ENCODE measurements at regions of chr2 and their contacts with region 1.

Region 1: DNA sequence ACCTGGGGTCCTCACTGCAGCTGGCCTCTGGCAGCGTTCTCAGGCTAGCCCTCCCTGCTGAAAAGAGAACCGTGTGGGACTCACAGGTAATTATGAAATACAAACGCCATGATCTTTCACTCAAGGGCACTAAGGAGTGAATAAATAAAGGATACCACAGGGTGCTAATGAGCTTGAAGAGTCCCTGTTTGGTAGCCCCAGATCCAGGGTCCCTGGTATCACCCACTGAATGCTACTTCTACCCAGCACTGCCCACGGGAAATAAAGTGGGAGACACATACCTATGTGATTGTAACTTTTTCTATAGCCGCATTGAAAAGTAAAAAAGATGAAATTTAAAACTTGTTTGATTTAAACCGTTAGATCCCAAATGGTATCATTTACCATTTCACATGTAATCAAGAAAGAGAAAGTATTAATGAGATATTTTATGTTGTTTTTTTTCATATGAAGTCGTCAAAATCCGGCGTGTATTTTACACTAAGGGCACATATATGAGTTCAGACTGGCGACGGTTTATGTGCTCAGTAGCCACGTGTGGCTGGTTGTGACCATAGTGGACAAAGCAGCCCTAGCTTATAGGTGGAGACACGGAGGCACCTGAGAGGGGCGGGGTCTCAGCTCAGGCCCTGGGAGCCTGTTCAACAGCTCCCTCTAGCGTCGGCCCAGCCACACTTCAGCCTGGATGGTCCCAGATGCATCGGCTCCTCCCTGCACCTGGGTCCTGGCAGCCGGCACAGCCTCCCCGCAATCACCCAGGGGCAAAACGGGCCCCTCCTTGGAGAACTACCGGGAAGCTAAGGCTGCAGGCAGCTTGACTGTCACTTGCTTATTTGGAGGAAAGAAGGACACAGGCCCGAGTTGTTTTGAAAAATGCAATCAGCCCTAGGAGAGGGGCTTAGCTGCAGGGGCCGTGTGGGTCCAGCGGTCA is 39.2 kb downstream of the ODC1 start:
- DNase-seq: peak; percentile 87
- ATAC-seq: peak; percentile 85
- H3K4me3 Mint-ChIP-seq: peak overlapping the region; percentile 74
- H3K27ac Mint-ChIP-seq: peak overlapping the region; percentile 91
- H3K4me1 Mint-ChIP-seq: peaks cover 39% of the 10 kb centered on the region
- H3K27me3 Mint-ChIP-seq: no peaks in the 10 kb centered on the region

Region 2: GRCh38 chr2:10072656-10073480 is 336.0 kb before region 1 on chr2:
- CTCF ChIA-PET with region 1: interaction called, 38 read pairs
- POLR2A ChIA-PET with region 1: no interaction called
- DNase-seq: peak; percentile 89
- ATAC-seq: peak; percentile 97
- H3K4me3 Mint-ChIP-seq: no peak overlapping the region
- H3K27ac Mint-ChIP-seq: no peak overlapping the region
- H3K4me1 Mint-ChIP-seq: peaks cover 13% of the 10 kb centered on the region
- H3K27me3 Mint-ChIP-seq: peaks cover 51% of the 10 kb centered on the region

Region 3: DNA sequence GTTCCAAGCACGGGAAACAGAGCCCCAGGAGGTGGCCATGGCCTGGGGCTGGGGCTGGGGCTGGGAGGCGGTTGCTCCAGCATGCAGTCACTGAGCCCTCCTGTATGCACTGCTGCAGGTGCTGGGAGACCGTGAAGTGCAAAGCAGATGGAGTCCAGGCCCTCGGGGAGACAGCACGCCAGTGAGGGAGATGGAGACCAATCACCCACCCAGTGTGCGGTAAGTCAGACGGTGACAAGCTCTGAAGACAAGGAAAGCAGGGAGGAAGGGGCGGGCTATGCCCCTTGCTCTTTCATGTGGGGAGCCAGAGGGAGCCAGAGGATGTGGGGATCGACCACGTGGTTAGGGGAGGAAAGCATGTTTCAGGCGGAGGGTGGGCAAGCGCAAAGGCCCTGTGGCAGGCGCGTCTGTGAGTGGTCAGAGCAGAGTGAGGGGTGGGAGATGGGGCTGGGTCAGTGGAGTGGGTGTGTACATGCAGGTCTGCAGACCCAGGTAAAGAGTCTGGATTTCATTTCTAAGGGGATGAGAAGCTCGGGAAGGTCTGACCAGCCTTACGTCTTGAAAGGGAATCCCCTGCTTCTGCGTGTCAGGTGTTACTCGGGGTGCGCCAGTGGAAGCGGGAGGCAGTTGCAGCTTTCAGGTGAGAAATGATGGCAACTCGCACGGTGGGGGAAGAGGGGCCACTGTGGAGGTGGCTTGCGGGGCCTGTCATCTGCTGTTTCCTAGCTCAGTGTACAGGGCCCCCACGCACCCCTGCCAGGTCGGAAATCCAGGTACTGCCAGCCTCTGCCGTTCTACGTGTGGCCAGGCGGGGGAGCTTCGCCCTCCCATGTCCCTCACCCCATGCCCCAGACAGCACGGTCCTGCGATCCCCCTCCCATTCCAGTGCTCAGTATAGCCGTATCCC is 266.9 kb before region 1 on chr2:
- CTCF ChIA-PET with region 1: interaction called, 55 read pairs
- POLR2A ChIA-PET with region 1: no interaction called
- DNase-seq: peak; percentile 75
- ATAC-seq: peak; percentile 59
- H3K4me3 Mint-ChIP-seq: peak overlapping the region; percentile 39
- H3K27ac Mint-ChIP-seq: peak overlapping the region; percentile 89
- H3K4me1 Mint-ChIP-seq: peaks cover 40% of the 10 kb centered on the region
- H3K27me3 Mint-ChIP-seq: no peaks in the 10 kb centered on the region

Region 4: GRCh38 chr2:10269711-10270610 is 139.0 kb before region 1 on chr2:
- CTCF ChIA-PET with region 1: interaction called, 41 read pairs
- POLR2A ChIA-PET with region 1: no interaction called
- DNase-seq: no peak
- ATAC-seq: no peak
- H3K4me3 Mint-ChIP-seq: no peak overlapping the region
- H3K27ac Mint-ChIP-seq: no peak overlapping the region
- H3K4me1 Mint-ChIP-seq: peaks cover 6% of the 10 kb centered on the region
- H3K27me3 Mint-ChIP-seq: peaks cover 3% of the 10 kb centered on the region

Region 5: GRCh38 chr2:10302479-10303180 is 106.3 kb before region 1 on chr2 and contains the start of gene HPCAL1:
- CTCF ChIA-PET with region 1: interaction called, 105 read pairs
- POLR2A ChIA-PET with region 1: interaction called, 6 read pairs
- DNase-seq: peak; percentile 87
- ATAC-seq: peak; percentile 72
- H3K4me3 Mint-ChIP-seq: peak within 1 kb of the TSS; percentile 99
- H3K27ac Mint-ChIP-seq: peak within 1 kb of the TSS; percentile 77
- H3K4me1 Mint-ChIP-seq: peaks cover 75% of the 10 kb centered on the region
- H3K27me3 Mint-ChIP-seq: no peaks in the 10 kb centered on the region
- total RNA-seq, gene HPCAL1: 55.8 to 56.6 TPM

Region 6: DNA sequence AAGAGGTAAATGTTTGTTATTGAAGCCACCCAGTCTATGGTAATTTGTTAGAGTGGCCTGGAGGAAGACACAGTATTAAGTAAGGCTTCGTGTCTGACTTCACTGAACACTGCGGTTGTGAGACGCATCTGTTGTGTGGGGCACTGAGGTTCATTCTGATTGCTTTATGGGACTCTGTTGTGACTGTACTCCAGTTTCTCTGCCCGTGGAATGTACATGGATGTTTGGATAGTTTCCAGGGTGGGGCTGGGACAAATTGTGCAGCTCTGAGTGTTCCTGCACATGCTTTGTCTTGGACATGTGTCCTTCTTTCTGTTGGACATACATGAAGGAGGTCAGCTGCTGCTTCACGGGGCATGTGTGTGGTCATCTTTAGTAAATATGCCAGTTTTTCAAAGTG is 19.3 kb before region 1 on chr2:
- CTCF ChIA-PET with region 1: interaction called, 43 read pairs
- POLR2A ChIA-PET with region 1: no interaction called
- DNase-seq: no peak
- ATAC-seq: no peak
- H3K4me3 Mint-ChIP-seq: no peak overlapping the region
- H3K27ac Mint-ChIP-seq: no peak overlapping the region
- H3K4me1 Mint-ChIP-seq: peaks cover 24% of the 10 kb centered on the region
- H3K27me3 Mint-ChIP-seq: no peaks in the 10 kb centered on the region